ENCODE measurements at regions of chr11 and their contacts with region 1.

Region 1: GRCh38 chr11:60887556-60887955 is 18.8 kb downstream of the PRPF19 start:
- DNase-seq: peak; percentile 55
- H3K4me3 Mint-ChIP-seq: no peak overlapping the region
- H3K27ac Mint-ChIP-seq: no peak overlapping the region
- H3K4me1 Mint-ChIP-seq: peaks cover 9% of the 10 kb centered on the region
- H3K27me3 Mint-ChIP-seq: no peaks in the 10 kb centered on the region

Region 2: GRCh38 chr11:60831143-60831500 is 56.4 kb before region 1 on chr11:
- CTCF ChIA-PET with region 1: interaction called, 281 read pairs
- POLR2A ChIA-PET with region 1: interaction called, 20 read pairs
- DNase-seq: peak; percentile 84
- H3K4me3 Mint-ChIP-seq: no peak overlapping the region
- H3K27ac Mint-ChIP-seq: no peak overlapping the region
- H3K4me1 Mint-ChIP-seq: peaks cover 30% of the 10 kb centered on the region
- H3K27me3 Mint-ChIP-seq: peaks cover 7% of the 10 kb centered on the region

Region 3: GRCh38 chr11:60848714-60849151 is 38.8 kb before region 1 on chr11:
- CTCF ChIA-PET with region 1: interaction called, 15 read pairs
- POLR2A ChIA-PET with region 1: interaction called, 3 read pairs
- DNase-seq: no peak
- H3K4me3 Mint-ChIP-seq: no peak overlapping the region
- H3K27ac Mint-ChIP-seq: peak overlapping the region; percentile 10
- H3K4me1 Mint-ChIP-seq: peaks cover 20% of the 10 kb centered on the region
- H3K27me3 Mint-ChIP-seq: no peaks in the 10 kb centered on the region

Region 4: DNA sequence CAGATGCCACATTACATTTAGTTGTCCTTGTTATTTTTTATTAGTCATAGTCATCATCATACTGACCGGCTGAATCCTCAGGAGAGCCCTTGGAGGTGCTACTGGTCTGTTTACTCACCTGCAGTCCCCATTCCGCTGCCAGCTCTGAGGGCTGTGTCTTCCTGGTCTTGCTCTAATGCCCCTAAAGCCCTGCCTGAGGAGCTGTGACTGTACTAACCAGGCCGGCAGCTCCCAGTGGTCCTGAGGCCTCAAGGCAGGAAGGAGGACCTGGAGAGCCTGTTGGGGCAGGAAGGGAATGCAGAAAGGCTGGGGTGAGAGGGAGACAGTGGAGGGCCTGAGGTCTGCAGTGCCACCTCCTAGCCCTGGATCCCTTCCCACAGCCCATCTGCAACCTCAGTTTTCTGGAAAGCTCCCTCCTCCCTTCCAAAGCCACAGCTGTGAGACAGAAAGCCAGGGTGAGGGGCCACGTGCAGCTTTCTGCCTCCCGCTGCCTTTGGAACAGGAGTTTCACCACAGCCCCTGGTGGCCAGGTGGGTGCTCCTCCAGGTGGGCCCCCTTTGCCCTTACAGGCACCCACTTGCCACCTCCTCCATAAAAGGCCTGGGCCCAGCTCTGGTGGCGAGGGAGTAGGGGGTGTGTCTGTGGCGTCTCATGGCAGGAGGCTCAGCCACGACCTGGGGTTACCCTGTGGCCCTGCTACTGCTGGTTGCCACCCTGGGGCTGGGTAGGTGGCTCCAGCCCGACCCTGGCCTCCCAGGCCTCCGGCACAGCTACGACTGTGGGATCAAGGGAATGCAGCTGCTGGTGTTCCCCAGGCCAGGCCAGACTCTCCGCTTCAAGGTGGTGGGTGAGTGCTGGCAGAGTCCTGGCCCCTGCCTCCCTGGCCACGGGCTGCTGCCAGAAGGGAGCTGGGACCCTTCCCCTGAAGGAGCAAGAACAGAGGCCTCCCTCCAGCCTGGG is 20.4 kb before region 1 on chr11 and contains the start of gene ZP1:
- CTCF ChIA-PET with region 1: interaction called, 16 read pairs
- POLR2A ChIA-PET with region 1: interaction called, 5 read pairs
- DNase-seq: no peak
- H3K4me3 Mint-ChIP-seq: no peak within 1 kb of the TSS
- H3K27ac Mint-ChIP-seq: peak within 1 kb of the TSS; percentile 51
- H3K4me1 Mint-ChIP-seq: peaks cover 62% of the 10 kb centered on the region
- H3K27me3 Mint-ChIP-seq: peaks cover 6% of the 10 kb centered on the region
- total RNA-seq, gene ZP1: 0.18 TPM in 1 of 2 experiments, not detected in the other

Region 5: DNA sequence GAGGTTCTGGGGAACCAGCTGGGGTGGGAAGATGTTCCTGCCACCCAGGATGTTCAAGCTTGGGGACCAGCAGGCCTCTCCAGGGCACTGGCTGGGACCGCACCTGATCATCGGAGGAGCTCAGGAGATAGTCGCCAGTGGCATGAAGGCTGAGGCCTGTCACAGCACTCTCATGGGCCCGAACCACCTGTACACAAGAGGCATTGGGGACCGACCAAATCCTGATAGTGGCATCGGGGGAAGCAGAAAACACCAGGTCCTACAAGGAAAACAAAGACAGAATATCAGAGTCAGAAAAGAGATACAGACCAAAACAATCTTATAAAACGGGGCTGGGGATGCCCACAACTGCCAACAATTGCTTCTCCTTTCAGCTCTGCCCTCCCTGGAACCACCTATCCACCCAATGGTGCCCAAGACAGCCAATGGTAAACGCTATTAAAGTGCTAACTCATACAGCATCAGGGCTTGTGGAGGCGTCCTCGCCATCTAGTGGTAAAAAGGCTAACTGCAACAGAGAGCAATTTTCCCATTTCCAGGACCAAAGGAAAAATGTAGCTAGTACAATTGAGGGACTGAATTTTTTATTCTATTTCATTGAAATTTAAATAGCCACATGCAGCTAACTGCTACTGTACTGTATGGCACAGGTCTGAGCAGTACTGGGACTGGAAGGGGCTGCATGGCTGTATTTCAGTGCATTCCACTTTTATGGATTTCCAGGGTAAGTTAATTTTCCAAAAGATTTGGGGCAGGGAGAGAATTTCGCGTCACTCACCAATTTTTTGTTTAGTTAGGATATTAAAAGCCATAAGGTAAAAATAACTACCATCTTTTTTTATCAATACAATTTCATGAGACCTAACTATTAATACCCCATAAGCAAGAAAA is 11.7 kb after region 1 on chr11:
- CTCF ChIA-PET with region 1: interaction called, 23 read pairs
- POLR2A ChIA-PET with region 1: interaction called, 6 read pairs
- DNase-seq: peak; percentile 33
- H3K4me3 Mint-ChIP-seq: no peak overlapping the region
- H3K27ac Mint-ChIP-seq: no peak overlapping the region
- H3K4me1 Mint-ChIP-seq: peaks cover 13% of the 10 kb centered on the region
- H3K27me3 Mint-ChIP-seq: no peaks in the 10 kb centered on the region

Region 6: GRCh38 chr11:60924110-60924905 is 36.8 kb after region 1 on chr11 and contains the start of gene TMEM132A:
- CTCF ChIA-PET with region 1: no interaction called
- POLR2A ChIA-PET with region 1: no interaction called
- DNase-seq: no peak
- H3K4me3 Mint-ChIP-seq: peak within 1 kb of the TSS; percentile 24
- H3K27ac Mint-ChIP-seq: no peak within 1 kb of the TSS
- H3K4me1 Mint-ChIP-seq: peaks cover 16% of the 10 kb centered on the region
- H3K27me3 Mint-ChIP-seq: peaks cover 30% of the 10 kb centered on the region
- total RNA-seq, gene TMEM132A: 0.30 TPM in 1 of 2 experiments, not detected in the other